CD4-positive, alpha-beta T cell (primary cell): ENCODE measurements at regions of chr14 and their contacts with region 1.

Region 1: DNA sequence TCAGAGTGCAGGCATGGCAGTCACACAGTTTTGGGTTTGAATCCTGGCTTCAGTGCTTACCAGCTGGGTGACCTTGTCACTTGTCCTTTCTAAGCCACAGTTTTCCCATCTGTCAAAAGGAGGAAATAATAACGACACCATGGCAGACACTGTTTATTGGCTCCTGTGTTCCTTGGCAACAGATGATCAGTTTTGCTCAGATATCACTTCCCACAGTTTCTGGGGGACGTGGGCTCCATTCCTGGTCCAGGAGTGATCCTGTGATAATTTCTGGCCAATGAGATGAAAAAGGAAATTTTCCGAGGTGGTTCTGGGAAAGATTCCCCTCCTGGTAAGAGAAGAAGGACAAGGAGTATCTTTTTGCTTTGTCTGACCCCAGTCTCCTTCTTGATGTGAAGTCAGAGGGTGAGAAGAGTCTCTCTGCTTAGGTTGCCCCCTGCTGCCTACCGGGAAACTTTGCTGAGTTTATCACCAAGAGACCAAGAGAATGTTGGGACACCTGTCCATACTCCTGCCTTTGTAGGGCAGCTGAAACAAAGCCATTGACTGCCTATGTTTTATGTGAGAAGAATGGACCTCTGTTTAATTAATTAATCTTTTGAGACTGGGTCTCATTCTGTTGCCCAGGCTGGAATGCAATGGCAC is 178.9 kb upstream of the NRXN3 start:
- DNase-seq: no peak
- ATAC-seq: no peak
- H3K4me3 ChIP-seq: no peak overlapping the region
- H3K4me3 Mint-ChIP-seq: no peak overlapping the region
- H3K27ac ChIP-seq: no peak overlapping the region
- H3K27ac Mint-ChIP-seq: no peak overlapping the region
- H3K4me1 ChIP-seq: no peaks in the 10 kb centered on the region
- H3K4me1 Mint-ChIP-seq: no peaks in the 10 kb centered on the region
- H3K27me3 ChIP-seq: no peaks in the 10 kb centered on the region
- H3K27me3 Mint-ChIP-seq: no peaks in the 10 kb centered on the region
- CTCF ChIP-seq: no peak

Region 2: GRCh38 chr14:77654001-77654441 is 337.2 kb before region 1 on chr14:
- CTCF ChIA-PET with region 1: no interaction called
- POLR2A ChIA-PET with region 1: no interaction called
- intact Hi-C with region 1: loop called in 1 of 2 experiments (anchors 10 kb)
- DNase-seq: no peak
- ATAC-seq: no peak
- H3K4me3 ChIP-seq: no peak overlapping the region
- H3K4me3 Mint-ChIP-seq: no peak overlapping the region
- H3K27ac ChIP-seq: no peak overlapping the region
- H3K27ac Mint-ChIP-seq: no peak overlapping the region
- H3K4me1 ChIP-seq: peaks cover 6% of the 10 kb centered on the region
- H3K4me1 Mint-ChIP-seq: peaks cover 4% of the 10 kb centered on the region
- H3K27me3 ChIP-seq: no peaks in the 10 kb centered on the region
- H3K27me3 Mint-ChIP-seq: no peaks in the 10 kb centered on the region
- CTCF ChIP-seq: no peak